HCT116 (cell line): ENCODE measurements at regions of chr1 and their contacts with region 1.

Region 1: GRCh38 chr1:93629099-93630059 is 52.3 kb downstream of the BCAR3 start:
- DNase-seq: peak; percentile 59
- ATAC-seq: peak; percentile 72
- H3K4me3 ChIP-seq: no peak overlapping the region
- H3K27ac ChIP-seq: no peak overlapping the region
- H3K4me1 ChIP-seq: peaks cover 0 to 69% of the 10 kb centered on the region in 2 experiments; a peak in 3 of 4 replicates
- H3K27me3 ChIP-seq: no peaks in the 10 kb centered on the region
- CTCF ChIP-seq: peak; percentile 72 to 90 (median 88)
- POLR2A ChIP-seq: no peak
- RAD21 ChIP-seq: peak; percentile 97

Region 2: GRCh38 chr1:93304716-93305138 is 324.7 kb before region 1 on chr1:
- CTCF ChIA-PET with region 1: interaction called, 4 read pairs
- POLR2A ChIA-PET with region 1: no interaction called
- RAD21 ChIA-PET with region 1: no interaction called
- intact Hi-C with region 1: loop called (anchors 5 kb)
- DNase-seq: peak; percentile 35
- ATAC-seq: peak; percentile 77
- H3K4me3 ChIP-seq: no peak overlapping the region
- H3K27ac ChIP-seq: no peak overlapping the region
- H3K4me1 ChIP-seq: no peaks in the 10 kb centered on the region
- H3K27me3 ChIP-seq: no peaks in the 10 kb centered on the region
- CTCF ChIP-seq: peak; percentile 61 to 93 (median 78); a peak in 5 of 6 replicates
- POLR2A ChIP-seq: no peak
- RAD21 ChIP-seq: peak; percentile 87

Region 3: GRCh38 chr1:93615582-93616150 is 13.7 kb before region 1 on chr1:
- CTCF ChIA-PET with region 1: interaction called, 10 read pairs
- POLR2A ChIA-PET with region 1: no interaction called
- RAD21 ChIA-PET with region 1: no interaction called
- intact Hi-C with region 1: no loop called
- DNase-seq: no peak
- ATAC-seq: peak; percentile 75
- H3K4me3 ChIP-seq: peak overlapping the region in 1 of 2 experiments; percentile 17; a peak in 1 of 4 replicates
- H3K27ac ChIP-seq: peak overlapping the region; percentile 62
- H3K4me1 ChIP-seq: peaks cover 42 to 64% of the 10 kb centered on the region in 2 experiments
- H3K27me3 ChIP-seq: no peaks in the 10 kb centered on the region
- CTCF ChIP-seq: no peak
- POLR2A ChIP-seq: no peak
- RAD21 ChIP-seq: no peak

Region 4: DNA sequence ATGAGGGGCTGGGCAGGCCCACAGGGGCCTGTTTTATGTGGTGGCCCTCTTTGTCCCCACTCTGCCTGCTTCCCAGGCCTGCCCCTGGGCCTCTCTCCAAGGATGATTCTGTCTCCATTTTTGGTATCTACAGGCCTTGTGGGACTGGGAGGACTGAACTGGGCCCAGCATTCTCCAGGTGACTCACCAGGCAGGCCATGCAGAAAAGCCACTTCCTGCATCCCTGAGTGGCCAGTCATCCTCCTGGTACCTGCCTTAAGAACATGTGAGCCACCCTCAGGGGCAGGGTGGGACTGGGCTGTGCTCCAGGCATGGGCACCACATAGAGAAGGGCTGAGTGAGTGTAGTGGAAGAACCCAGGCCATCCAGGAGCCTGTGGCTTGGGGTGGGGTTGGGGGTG is 72.2 kb after region 1 on chr1:
- CTCF ChIA-PET with region 1: interaction called, 17 read pairs
- POLR2A ChIA-PET with region 1: no interaction called
- RAD21 ChIA-PET with region 1: interaction called, 7 to 10 read pairs
- intact Hi-C with region 1: no loop called
- DNase-seq: peak; percentile 97
- ATAC-seq: peak; percentile 84
- H3K4me3 ChIP-seq: peak overlapping the region in 1 of 2 experiments; percentile 6; a peak in 1 of 4 replicates
- H3K27ac ChIP-seq: peak overlapping the region; percentile 74
- H3K4me1 ChIP-seq: peaks cover 41 to 97% of the 10 kb centered on the region in 2 experiments
- H3K27me3 ChIP-seq: no peaks in the 10 kb centered on the region
- CTCF ChIP-seq: no peak
- POLR2A ChIP-seq: no peak
- RAD21 ChIP-seq: no peak

Region 5: DNA sequence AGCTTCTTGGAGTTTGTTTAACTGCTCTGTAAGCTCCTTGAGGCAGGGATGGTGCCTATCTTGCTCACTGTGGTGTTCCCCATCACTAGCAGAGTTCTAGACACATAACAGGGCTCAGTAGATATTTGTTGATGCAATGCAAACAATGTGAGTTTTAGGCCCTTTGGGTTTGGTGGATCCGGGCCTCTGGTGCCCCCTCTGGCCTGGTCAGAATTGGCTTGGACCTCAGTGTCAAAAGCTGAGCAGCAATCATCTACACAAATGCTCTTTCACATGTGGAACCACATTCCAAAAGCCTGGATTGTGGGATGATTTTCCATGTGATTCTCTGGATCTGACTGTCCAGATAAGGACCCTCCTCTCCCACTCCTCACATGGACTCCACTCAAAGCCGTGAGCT is 105.6 kb after region 1 on chr1:
- CTCF ChIA-PET with region 1: interaction called, 11 read pairs
- POLR2A ChIA-PET with region 1: no interaction called
- RAD21 ChIA-PET with region 1: no interaction called
- intact Hi-C with region 1: loop called (anchors 5 kb)
- DNase-seq: no peak
- ATAC-seq: no peak
- H3K4me3 ChIP-seq: no peak overlapping the region
- H3K27ac ChIP-seq: no peak overlapping the region
- H3K4me1 ChIP-seq: peaks cover 19 to 80% of the 10 kb centered on the region in 2 experiments
- H3K27me3 ChIP-seq: no peaks in the 10 kb centered on the region
- CTCF ChIP-seq: peak in 2 of 3 experiments; percentile 54 to 60; a peak in 4 of 6 replicates
- POLR2A ChIP-seq: no peak
- RAD21 ChIP-seq: peak; percentile 38

Region 6: DNA sequence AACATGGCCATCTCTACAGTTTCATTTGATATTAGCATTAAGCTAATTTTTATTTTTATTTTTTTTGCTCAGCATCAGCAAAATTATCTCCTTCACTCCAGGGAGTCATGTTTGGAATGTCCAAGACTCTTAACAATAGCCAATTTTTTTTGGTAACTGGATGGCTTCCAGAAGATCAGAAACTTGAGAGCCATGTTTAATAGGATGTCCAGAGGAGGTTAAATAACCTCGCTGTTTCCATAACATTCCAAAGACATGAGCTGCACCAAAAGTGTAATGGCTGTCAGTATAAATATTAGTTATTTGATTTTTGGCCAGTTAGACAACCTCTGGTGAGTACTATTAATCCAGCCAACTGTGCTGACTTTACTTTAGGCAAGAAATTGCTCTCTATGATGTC is 168.9 kb after region 1 on chr1:
- CTCF ChIA-PET with region 1: no interaction called
- POLR2A ChIA-PET with region 1: no interaction called
- RAD21 ChIA-PET with region 1: no interaction called
- intact Hi-C with region 1: no loop called
- DNase-seq: no peak
- ATAC-seq: no peak
- H3K4me3 ChIP-seq: no peak overlapping the region
- H3K27ac ChIP-seq: no peak overlapping the region
- H3K4me1 ChIP-seq: peaks cover 0 to 6% of the 10 kb centered on the region in 2 experiments; a peak in 1 of 4 replicates
- H3K27me3 ChIP-seq: no peaks in the 10 kb centered on the region
- CTCF ChIP-seq: no peak
- POLR2A ChIP-seq: no peak
- RAD21 ChIP-seq: no peak

Region 7: DNA sequence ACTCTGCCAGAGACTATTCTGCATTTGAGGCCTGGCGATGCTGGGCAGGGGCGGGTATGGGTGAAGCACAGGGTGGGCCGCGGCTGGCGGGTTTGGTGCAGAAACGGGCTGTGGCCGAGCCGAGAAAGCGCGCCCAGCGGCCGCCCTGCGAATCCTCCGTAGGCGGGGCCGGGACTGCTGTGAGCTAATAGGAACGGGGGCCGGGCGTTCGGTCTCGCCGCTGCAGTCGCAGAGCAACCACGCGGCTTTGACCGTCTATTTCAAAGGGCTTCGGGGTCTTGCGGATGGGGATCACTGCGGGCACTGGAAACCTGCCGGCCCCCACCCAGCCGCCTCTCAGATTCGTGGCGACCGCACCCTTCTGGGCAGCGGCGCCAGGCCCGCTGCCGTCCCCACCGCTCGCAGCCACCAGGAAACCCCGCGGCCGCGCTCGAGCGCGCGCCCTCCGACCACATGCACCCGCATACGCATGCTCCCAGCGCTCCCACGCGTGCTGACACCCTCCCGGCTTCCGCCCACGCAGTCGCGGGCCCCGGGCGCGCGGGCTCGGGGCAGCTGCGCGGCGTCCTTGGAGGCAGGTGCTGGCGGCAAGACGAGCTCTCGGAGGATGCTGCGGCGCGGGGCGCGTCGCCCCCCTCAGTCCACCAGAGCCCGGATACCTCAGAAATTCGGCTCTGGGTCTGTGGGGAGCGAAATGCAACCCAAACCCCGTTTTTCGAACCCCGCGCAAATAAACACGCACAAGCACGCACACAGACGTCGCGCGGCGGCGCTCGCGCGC is 217.0 kb after region 1 on chr1:
- CTCF ChIA-PET with region 1: interaction called, 83 read pairs
- POLR2A ChIA-PET with region 1: no interaction called
- RAD21 ChIA-PET with region 1: interaction called, 6 to 11 read pairs
- intact Hi-C with region 1: loop called (anchors 1 kb)
- DNase-seq: peak; percentile 53
- ATAC-seq: peak; percentile 67
- H3K4me3 ChIP-seq: peak overlapping the region; percentile 59 to 79
- H3K27ac ChIP-seq: peak overlapping the region; percentile 69
- H3K4me1 ChIP-seq: peaks cover 7 to 33% of the 10 kb centered on the region in 2 experiments; a peak in 3 of 4 replicates
- H3K27me3 ChIP-seq: no peaks in the 10 kb centered on the region
- CTCF ChIP-seq: peak in 1 of 3 experiments; percentile 32; a peak in 2 of 6 replicates
- POLR2A ChIP-seq: peak; percentile 36
- RAD21 ChIP-seq: no peak